ENCODE measurements at regions of chr1 and their contacts with region 1.

Region 1: GRCh38 chr1:54671985-54672608 is 30.5 kb downstream of the MROH7 start:
- DNase-seq: no peak
- ATAC-seq: no peak
- H3K4me3 ChIP-seq: no peak overlapping the region
- H3K27ac ChIP-seq: no peak overlapping the region
- H3K4me1 ChIP-seq: no peaks in the 10 kb centered on the region
- H3K27me3 ChIP-seq: no peaks in the 10 kb centered on the region
- CTCF ChIP-seq: peak in 4 of 5 experiments; percentile 37 to 60 (median 47)
- POLR2A ChIP-seq: no peak

Region 2: DNA sequence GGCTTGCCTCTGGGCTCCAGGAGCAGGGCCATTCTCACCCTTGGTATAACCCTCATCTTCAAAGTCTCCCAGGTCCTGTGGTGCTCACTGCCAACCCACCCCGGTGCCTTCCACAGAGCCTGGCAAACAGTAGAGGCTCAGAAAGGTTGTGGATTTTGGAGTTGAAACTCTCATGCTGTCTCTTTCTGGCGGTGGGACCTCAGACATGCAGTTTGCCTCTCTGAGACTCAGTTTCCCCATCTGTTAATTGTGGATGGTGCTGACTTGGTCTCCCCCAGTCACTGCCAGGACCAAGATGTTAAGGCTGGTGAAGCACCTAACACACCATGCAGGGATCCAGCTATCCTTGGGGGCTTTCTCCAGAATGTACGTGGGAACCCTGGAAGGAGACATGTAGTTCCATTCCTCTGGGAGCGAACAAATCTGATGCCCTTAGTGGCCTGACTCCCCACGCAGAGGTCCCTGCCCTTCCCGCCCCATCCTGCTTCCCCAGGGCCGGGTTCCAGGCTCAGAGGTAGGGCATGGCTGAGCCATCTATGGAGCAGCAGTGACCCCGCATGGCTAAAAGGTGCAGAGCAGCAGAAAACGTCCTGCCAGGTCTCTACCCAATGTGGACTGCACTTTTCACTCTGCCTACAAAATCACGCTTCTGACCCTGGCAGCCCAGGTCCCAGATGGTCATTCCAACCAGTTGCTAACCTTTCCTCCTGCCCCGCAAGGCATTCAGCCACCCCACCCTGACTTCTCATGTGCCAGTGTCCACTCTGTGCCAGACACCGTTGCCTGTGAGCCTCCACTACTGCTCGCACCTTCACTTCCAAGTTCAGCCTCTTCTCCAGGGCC is 138.2 kb after region 1 on chr1:
- in situ Hi-C with region 1: no loop called
- intact Hi-C with region 1: loop called (anchors 5 kb)
- DNase-seq: no peak
- ATAC-seq: peak; percentile 79 to 81
- H3K4me3 ChIP-seq: no peak overlapping the region
- H3K27ac ChIP-seq: no peak overlapping the region
- H3K4me1 ChIP-seq: no peaks in the 10 kb centered on the region
- H3K27me3 ChIP-seq: no peaks in the 10 kb centered on the region
- CTCF ChIP-seq: peak; percentile 59 to 80 (median 73)
- POLR2A ChIP-seq: no peak

Measured in gastrocnemius medialis (tissue), 4 donors.